ENCODE measurements at regions of chr1 and their contacts with region 1.

Region 1: GRCh38 chr1:6423321-6423999 is 1.1 kb upstream of the ESPN start:
- DNase-seq: peak; percentile 83
- ATAC-seq: peak; percentile 83
- H3K4me3 Mint-ChIP-seq: peak overlapping the region; percentile 15
- H3K27ac Mint-ChIP-seq: no peak overlapping the region
- H3K4me1 Mint-ChIP-seq: peaks cover 14% of the 10 kb centered on the region
- H3K27me3 Mint-ChIP-seq: peaks cover 50% of the 10 kb centered on the region
- CTCF ChIP-seq: peak; percentile 91

Region 2: GRCh38 chr1:6235296-6235677 is 188.2 kb before region 1 on chr1:
- CTCF ChIA-PET with region 1: interaction called, 13 read pairs
- POLR2A ChIA-PET with region 1: no interaction called
- intact Hi-C with region 1: no loop called
- DNase-seq: peak; percentile 46
- ATAC-seq: no peak
- H3K4me3 Mint-ChIP-seq: peak overlapping the region; percentile 91
- H3K27ac Mint-ChIP-seq: peak overlapping the region; percentile 81
- H3K4me1 Mint-ChIP-seq: peaks cover 22% of the 10 kb centered on the region
- H3K27me3 Mint-ChIP-seq: peaks cover 16% of the 10 kb centered on the region
- CTCF ChIP-seq: no peak

Region 3: GRCh38 chr1:6280761-6281451 is 142.6 kb before region 1 on chr1:
- CTCF ChIA-PET with region 1: no interaction called
- POLR2A ChIA-PET with region 1: no interaction called
- intact Hi-C with region 1: no loop called
- DNase-seq: no peak
- ATAC-seq: no peak
- H3K4me3 Mint-ChIP-seq: no peak overlapping the region
- H3K27ac Mint-ChIP-seq: no peak overlapping the region
- H3K4me1 Mint-ChIP-seq: no peaks in the 10 kb centered on the region
- H3K27me3 Mint-ChIP-seq: no peaks in the 10 kb centered on the region
- CTCF ChIP-seq: no peak

Region 4: GRCh38 chr1:6343506-6344405 is 79.7 kb before region 1 on chr1:
- CTCF ChIA-PET with region 1: interaction called, 10 read pairs
- POLR2A ChIA-PET with region 1: interaction called, 3 read pairs
- intact Hi-C with region 1: no loop called
- DNase-seq: peak; percentile 78
- ATAC-seq: peak; percentile 89
- H3K4me3 Mint-ChIP-seq: no peak overlapping the region
- H3K27ac Mint-ChIP-seq: no peak overlapping the region
- H3K4me1 Mint-ChIP-seq: peaks cover 10% of the 10 kb centered on the region
- H3K27me3 Mint-ChIP-seq: no peaks in the 10 kb centered on the region
- CTCF ChIP-seq: peak; percentile 93

Region 5: GRCh38 chr1:6438047-6438525 is 14.6 kb after region 1 on chr1:
- CTCF ChIA-PET with region 1: interaction called, 75 read pairs
- POLR2A ChIA-PET with region 1: interaction called, 4 read pairs
- intact Hi-C with region 1: no loop called
- DNase-seq: peak; percentile 82
- ATAC-seq: peak; percentile 75
- H3K4me3 Mint-ChIP-seq: no peak overlapping the region
- H3K27ac Mint-ChIP-seq: no peak overlapping the region
- H3K4me1 Mint-ChIP-seq: peaks cover 4% of the 10 kb centered on the region
- H3K27me3 Mint-ChIP-seq: peaks cover 22% of the 10 kb centered on the region
- CTCF ChIP-seq: peak; percentile 93

Region 6: DNA sequence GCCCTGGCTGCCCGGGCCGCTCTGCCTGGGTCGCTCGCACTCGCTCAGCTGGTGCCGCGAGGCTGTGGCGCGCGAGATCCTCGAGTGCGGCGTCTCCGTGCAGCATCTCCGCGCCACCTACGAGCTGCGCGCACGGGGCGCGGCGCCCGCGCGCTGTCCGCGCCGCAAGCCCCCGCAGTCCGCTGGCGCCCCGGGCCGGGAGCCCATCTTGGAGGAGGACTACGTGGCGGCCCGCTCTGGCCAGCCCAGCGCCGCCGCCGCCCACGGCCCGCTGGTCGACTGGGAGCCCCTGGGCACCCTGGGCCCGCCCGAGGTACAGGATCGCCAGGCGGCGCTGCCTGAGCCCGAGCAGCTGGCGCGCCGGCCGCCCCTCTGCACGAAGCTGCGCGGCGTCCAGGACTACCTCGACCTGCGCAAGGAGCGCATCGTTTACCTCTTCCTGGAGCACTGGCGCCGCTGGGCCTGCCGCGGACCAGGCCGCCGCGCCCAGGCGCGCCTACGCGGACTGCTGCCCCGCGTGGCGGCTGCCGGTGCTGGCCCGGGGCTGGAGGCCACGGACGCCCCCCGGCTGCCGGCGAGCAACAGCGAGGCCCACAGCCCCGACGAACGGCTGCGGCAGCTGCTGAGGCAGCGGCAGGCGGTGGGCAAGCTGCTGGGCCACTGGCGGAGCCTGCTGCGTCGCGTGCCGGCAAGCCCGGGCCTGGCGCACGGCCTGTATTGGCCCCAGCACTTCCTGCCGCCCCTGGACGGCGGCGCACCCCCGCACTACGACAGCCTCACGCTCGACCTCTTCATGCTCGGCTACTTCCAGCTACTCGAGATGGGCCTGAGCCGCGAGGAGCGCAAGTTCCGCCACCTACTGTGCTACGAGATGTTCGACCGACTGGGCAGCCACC is 31.6 kb after region 1 on chr1:
- CTCF ChIA-PET with region 1: interaction called, 33 read pairs
- POLR2A ChIA-PET with region 1: no interaction called
- intact Hi-C with region 1: no loop called
- DNase-seq: peak; percentile 39
- ATAC-seq: peak; percentile 50
- H3K4me3 Mint-ChIP-seq: no peak overlapping the region
- H3K27ac Mint-ChIP-seq: no peak overlapping the region
- H3K4me1 Mint-ChIP-seq: peaks cover 18% of the 10 kb centered on the region
- H3K27me3 Mint-ChIP-seq: peaks cover 46% of the 10 kb centered on the region
- CTCF ChIP-seq: peak; percentile 41

Region 7: GRCh38 chr1:6475381-6476133 is 52.1 kb after region 1 on chr1:
- CTCF ChIA-PET with region 1: interaction called, 10 read pairs
- POLR2A ChIA-PET with region 1: interaction called, 3 read pairs
- intact Hi-C with region 1: no loop called
- DNase-seq: peak; percentile 80
- ATAC-seq: peak; percentile 95
- H3K4me3 Mint-ChIP-seq: no peak overlapping the region
- H3K27ac Mint-ChIP-seq: no peak overlapping the region
- H3K4me1 Mint-ChIP-seq: peaks cover 2% of the 10 kb centered on the region
- H3K27me3 Mint-ChIP-seq: no peaks in the 10 kb centered on the region
- CTCF ChIP-seq: peak; percentile 96

Measured in activated CD8-positive, alpha-beta T cell treated with anti-CD3 and anti-CD28 coated beads for 36 hours (primary cell).